ENCODE measurements at regions of chr17 and their contacts with region 1.

Region 1: GRCh38 chr17:74499992-74500391 is 31.3 kb downstream of the CD300LB start:
- DNase-seq: no peak
- ATAC-seq: no peak
- H3K4me3 ChIP-seq: no peak overlapping the region
- H3K27ac ChIP-seq: no peak overlapping the region
- H3K4me1 ChIP-seq: no peaks in the 10 kb centered on the region
- H3K27me3 ChIP-seq: peaks cover 7% of the 10 kb centered on the region
- CTCF ChIP-seq: no peak

Region 2: GRCh38 chr17:74633326-74633725 is 133.3 kb after region 1 on chr17:
- CTCF ChIA-PET with region 1: no interaction called
- POLR2A ChIA-PET with region 1: interaction called, 10 read pairs
- in situ Hi-C with region 1: no loop called
- intact Hi-C with region 1: no loop called
- DNase-seq: no peak
- ATAC-seq: no peak
- H3K4me3 ChIP-seq: no peak overlapping the region
- H3K27ac ChIP-seq: no peak overlapping the region
- H3K4me1 ChIP-seq: no peaks in the 10 kb centered on the region
- H3K27me3 ChIP-seq: peaks cover 10% of the 10 kb centered on the region
- CTCF ChIP-seq: no peak